CD8-positive, alpha-beta memory T cell (primary cell): ENCODE measurements at regions of chr10 and their contacts with region 1.

Region 1: DNA sequence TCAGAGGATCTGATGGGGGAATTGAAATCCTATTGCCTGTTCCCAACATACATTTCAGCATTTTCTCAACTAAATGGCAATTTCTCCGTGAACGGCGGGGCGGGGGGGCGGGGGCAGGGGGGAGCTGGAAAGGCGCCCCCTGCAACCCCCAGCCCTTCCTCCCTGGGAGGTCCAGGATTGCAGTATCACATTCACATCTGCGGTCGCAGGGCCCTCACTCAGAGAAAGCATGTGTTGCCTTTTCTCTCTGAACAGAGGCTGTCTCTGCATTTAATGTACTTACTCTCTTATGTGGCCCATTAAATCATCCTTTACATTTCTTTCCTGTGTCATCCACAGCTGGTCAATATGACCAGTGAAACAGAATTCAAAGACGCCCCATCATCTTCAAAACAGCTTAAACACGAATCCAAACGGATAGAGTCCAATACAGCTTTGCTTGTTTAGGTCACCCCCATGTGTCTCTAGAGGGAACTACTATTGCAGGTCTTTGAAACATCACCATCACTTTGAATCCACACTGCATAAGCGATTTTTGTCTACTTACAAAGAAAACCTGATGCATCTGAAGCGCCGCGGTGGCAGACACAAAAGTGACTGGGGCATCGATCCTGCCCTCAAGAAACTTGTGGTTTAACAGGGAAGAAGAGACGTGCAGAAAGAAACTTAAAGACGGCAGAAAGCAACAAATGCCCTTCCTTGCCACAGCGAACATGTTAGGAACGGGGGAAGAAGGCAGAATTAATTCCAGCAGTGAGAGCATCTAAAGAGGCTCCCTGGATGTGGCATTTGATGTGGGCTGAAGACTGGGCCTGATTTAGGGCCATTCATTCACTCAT is 17.0 kb upstream of the ECHDC3 start:
- DNase-seq: peak in 1 of 5 donors; percentile 55
- H3K4me3 ChIP-seq: no peak overlapping the region
- H3K4me3 Mint-ChIP-seq: no peak overlapping the region
- H3K27ac ChIP-seq: no peak overlapping the region
- H3K27ac Mint-ChIP-seq: no peak overlapping the region
- H3K4me1 ChIP-seq: no peaks in the 10 kb centered on the region
- H3K4me1 Mint-ChIP-seq: peaks cover 0 to 1% (median 0%) of the 10 kb centered on the region in 3 donors
- H3K27me3 ChIP-seq: no peaks in the 10 kb centered on the region
- H3K27me3 Mint-ChIP-seq: peaks cover 4 to 15% of the 10 kb centered on the region in 2 donors

Region 2: GRCh38 chr10:11515596-11516430 is 209.3 kb before region 1 on chr10:
- CTCF ChIA-PET with region 1: interaction called, 10 read pairs
- POLR2A ChIA-PET with region 1: no interaction called
- DNase-seq: peak in 4 of 5 donors; percentile 27 to 60 (median 41)
- H3K4me3 ChIP-seq: no peak overlapping the region
- H3K4me3 Mint-ChIP-seq: no peak overlapping the region
- H3K27ac ChIP-seq: no peak overlapping the region
- H3K27ac Mint-ChIP-seq: no peak overlapping the region
- H3K4me1 ChIP-seq: no peaks in the 10 kb centered on the region
- H3K4me1 Mint-ChIP-seq: peaks cover 0 to 4% (median 4%) of the 10 kb centered on the region in 3 donors
- H3K27me3 ChIP-seq: no peaks in the 10 kb centered on the region
- H3K27me3 Mint-ChIP-seq: peaks cover 0 to 5% of the 10 kb centered on the region in 2 donors

Region 3: DNA sequence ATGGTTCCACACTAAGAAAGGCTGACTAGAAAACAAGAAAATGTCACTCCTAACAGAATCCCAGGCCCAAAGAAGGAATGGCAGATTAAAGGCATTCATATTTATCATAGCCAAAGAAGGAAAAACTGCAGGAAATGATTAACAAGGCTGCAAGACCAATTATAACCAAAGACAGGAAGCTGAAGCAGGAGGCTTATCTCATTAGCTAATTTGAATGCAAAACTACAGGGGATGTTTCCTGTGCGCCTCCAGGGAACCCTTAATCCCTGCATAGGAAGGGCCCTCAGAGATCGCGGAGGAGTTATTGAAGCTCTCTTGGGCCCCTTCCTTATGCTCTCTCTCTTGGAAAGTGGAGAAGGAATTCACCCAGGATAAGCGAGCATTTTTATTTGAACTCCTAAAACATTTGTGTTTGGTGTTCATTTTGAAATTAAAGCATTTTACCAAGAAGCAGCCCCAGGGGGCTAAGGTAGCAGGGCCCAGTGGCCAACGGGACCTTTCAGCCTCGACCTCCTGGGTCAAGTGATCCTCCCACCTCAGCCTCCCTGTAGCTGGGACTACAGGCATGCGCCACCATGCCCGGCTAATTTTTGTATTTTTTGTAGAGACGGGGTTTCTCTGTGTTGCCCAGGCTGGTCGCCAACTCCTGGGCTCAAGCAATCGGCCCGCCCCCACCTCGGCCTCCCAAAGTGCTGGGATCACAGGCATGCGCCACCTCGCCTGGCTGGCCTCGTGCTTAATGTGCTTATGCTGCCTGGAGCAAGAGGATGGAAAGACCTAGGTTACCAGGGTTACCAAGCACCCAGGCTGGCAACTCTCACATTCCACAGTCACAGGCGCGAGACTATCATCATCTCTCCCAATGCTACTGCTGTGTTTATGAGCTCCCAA is 73.9 kb after region 1 on chr10:
- CTCF ChIA-PET with region 1: no interaction called
- POLR2A ChIA-PET with region 1: no interaction called
- DNase-seq: no peak
- H3K4me3 ChIP-seq: no peak overlapping the region
- H3K4me3 Mint-ChIP-seq: no peak overlapping the region
- H3K27ac ChIP-seq: no peak overlapping the region
- H3K27ac Mint-ChIP-seq: no peak overlapping the region
- H3K4me1 ChIP-seq: no peaks in the 10 kb centered on the region
- H3K4me1 Mint-ChIP-seq: no peaks in the 10 kb centered on the region
- H3K27me3 ChIP-seq: no peaks in the 10 kb centered on the region
- H3K27me3 Mint-ChIP-seq: peaks cover 0 to 4% of the 10 kb centered on the region in 2 donors